Calu3 (cell line): ENCODE measurements at regions of chr20 and their contacts with region 1.

Region 1: GRCh38 chr20:47379433-47380150 is 23.1 kb upstream of the ZMYND8 start:
- DNase-seq: no peak
- H3K4me3 Mint-ChIP-seq: no peak overlapping the region
- H3K27ac Mint-ChIP-seq: no peak overlapping the region
- H3K4me1 Mint-ChIP-seq: peaks cover 32% of the 10 kb centered on the region
- H3K27me3 Mint-ChIP-seq: no peaks in the 10 kb centered on the region
- CTCF ChIP-seq: no peak

Region 2: DNA sequence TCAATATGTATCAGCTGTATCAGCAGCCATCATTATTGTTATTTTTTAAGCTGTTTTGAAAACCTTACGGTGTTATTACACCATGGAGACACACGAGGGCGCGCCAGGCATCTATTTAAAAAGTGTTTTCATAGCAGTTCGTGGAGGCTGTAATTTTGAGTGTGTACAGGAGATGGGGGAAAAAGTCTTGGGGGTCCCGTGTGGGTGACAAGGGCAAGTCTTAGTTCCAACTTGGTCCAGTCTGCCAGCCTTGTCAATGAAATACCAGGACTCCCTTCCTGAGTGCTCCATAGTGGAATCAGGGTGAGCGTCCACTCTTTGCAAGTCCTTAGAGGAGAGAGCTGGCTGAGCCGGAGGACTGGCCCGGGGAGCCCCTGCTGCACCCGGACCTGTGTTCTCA is 626.9 kb before region 1 on chr20:
- CTCF ChIA-PET with region 1: interaction called, 19 read pairs
- intact Hi-C with region 1: loop called (anchors 5 kb)
- DNase-seq: peak; percentile 80
- H3K4me3 Mint-ChIP-seq: peak overlapping the region; percentile 0
- H3K27ac Mint-ChIP-seq: no peak overlapping the region
- H3K4me1 Mint-ChIP-seq: peaks cover 12% of the 10 kb centered on the region
- H3K27me3 Mint-ChIP-seq: no peaks in the 10 kb centered on the region
- CTCF ChIP-seq: peak; percentile 82

Region 3: GRCh38 chr20:47205577-47206498 is 173.8 kb before region 1 on chr20:
- CTCF ChIA-PET with region 1: interaction called, 49 read pairs
- intact Hi-C with region 1: no loop called
- DNase-seq: peak; percentile 93
- H3K4me3 Mint-ChIP-seq: peak overlapping the region; percentile 51
- H3K27ac Mint-ChIP-seq: peak overlapping the region; percentile 75
- H3K4me1 Mint-ChIP-seq: peaks cover 61% of the 10 kb centered on the region
- H3K27me3 Mint-ChIP-seq: no peaks in the 10 kb centered on the region
- CTCF ChIP-seq: peak; percentile 99

Region 4: GRCh38 chr20:47296950-47297349 is 82.6 kb before region 1 on chr20:
- CTCF ChIA-PET with region 1: interaction called, 12 read pairs
- intact Hi-C with region 1: loop called (anchors 5 kb)
- DNase-seq: peak; percentile 33
- H3K4me3 Mint-ChIP-seq: no peak overlapping the region
- H3K27ac Mint-ChIP-seq: peak overlapping the region; percentile 56
- H3K4me1 Mint-ChIP-seq: peaks cover 8% of the 10 kb centered on the region
- H3K27me3 Mint-ChIP-seq: no peaks in the 10 kb centered on the region
- CTCF ChIP-seq: no peak

Region 5: GRCh38 chr20:47317127-47317895 is 62.3 kb before region 1 on chr20:
- CTCF ChIA-PET with region 1: interaction called, 34 read pairs
- intact Hi-C with region 1: no loop called
- DNase-seq: peak; percentile 87
- H3K4me3 Mint-ChIP-seq: peak overlapping the region; percentile 54
- H3K27ac Mint-ChIP-seq: peak overlapping the region; percentile 97
- H3K4me1 Mint-ChIP-seq: peaks cover 70% of the 10 kb centered on the region
- H3K27me3 Mint-ChIP-seq: no peaks in the 10 kb centered on the region
- CTCF ChIP-seq: no peak

Region 6: GRCh38 chr20:47456952-47457724 is 77.5 kb after region 1 on chr20:
- CTCF ChIA-PET with region 1: interaction called, 10 read pairs
- intact Hi-C with region 1: no loop called
- DNase-seq: peak; percentile 31
- H3K4me3 Mint-ChIP-seq: no peak overlapping the region
- H3K27ac Mint-ChIP-seq: no peak overlapping the region
- H3K4me1 Mint-ChIP-seq: peaks cover 43% of the 10 kb centered on the region
- H3K27me3 Mint-ChIP-seq: no peaks in the 10 kb centered on the region
- CTCF ChIP-seq: no peak

Region 7: GRCh38 chr20:47501483-47502270 is 122.1 kb after region 1 on chr20 and contains the start of gene NCOA3:
- CTCF ChIA-PET with region 1: interaction called, 14 read pairs
- intact Hi-C with region 1: no loop called
- DNase-seq: peak; percentile 99
- H3K4me3 Mint-ChIP-seq: peak within 1 kb of the TSS; percentile 83
- H3K27ac Mint-ChIP-seq: peak within 1 kb of the TSS; percentile 80
- H3K4me1 Mint-ChIP-seq: peaks cover 49% of the 10 kb centered on the region
- H3K27me3 Mint-ChIP-seq: no peaks in the 10 kb centered on the region
- CTCF ChIP-seq: peak; percentile 77
- total RNA-seq, gene NCOA3: 60.3 and 63.8 TPM in 2 replicates

Region 8: GRCh38 chr20:47798902-47799655 is 419.5 kb after region 1 on chr20:
- CTCF ChIA-PET with region 1: no interaction called
- intact Hi-C with region 1: no loop called
- DNase-seq: no peak
- H3K4me3 Mint-ChIP-seq: no peak overlapping the region
- H3K27ac Mint-ChIP-seq: no peak overlapping the region
- H3K4me1 Mint-ChIP-seq: peaks cover 23% of the 10 kb centered on the region
- H3K27me3 Mint-ChIP-seq: no peaks in the 10 kb centered on the region
- CTCF ChIP-seq: no peak